MCF 10A (cell line): ENCODE measurements at regions of chr3 and their contacts with region 1.

Region 1: DNA sequence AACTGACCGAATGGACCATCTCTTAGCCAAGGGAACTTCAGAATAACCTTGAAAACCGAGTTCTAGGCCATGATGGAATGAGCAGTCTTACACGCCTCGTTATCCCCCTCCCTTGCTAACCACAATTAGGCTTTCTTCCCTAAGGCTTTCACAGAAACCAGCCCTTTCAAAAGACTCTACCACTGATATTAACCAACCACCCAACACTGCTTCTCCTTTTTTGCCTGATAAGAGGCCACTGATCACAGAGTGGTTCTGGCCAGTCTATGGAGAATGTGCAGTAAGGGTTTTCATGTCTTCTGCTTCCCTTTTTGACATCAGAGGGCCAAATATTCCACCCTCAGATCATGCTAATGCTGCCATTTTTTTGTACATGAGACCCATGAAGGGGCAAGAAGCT is 59.3 kb downstream of the MCF2L2 start:
- DNase-seq: no peak
- H3K4me3 Mint-ChIP-seq: peak overlapping the region; percentile 20
- H3K27ac Mint-ChIP-seq: peak overlapping the region; percentile 96
- H3K4me1 Mint-ChIP-seq: peaks cover 26% of the 10 kb centered on the region
- H3K27me3 Mint-ChIP-seq: no peaks in the 10 kb centered on the region
- CTCF ChIP-seq: no peak

Region 2: GRCh38 chr3:183275418-183275817 is 93.7 kb before region 1 on chr3:
- CTCF ChIA-PET with region 1: no interaction called
- POLR2A ChIA-PET with region 1: interaction called, 12 read pairs
- intact Hi-C with region 1: no loop called
- DNase-seq: peak; percentile 77
- H3K4me3 Mint-ChIP-seq: peak overlapping the region; percentile 19
- H3K27ac Mint-ChIP-seq: peak overlapping the region; percentile 17
- H3K4me1 Mint-ChIP-seq: peaks cover 41% of the 10 kb centered on the region
- H3K27me3 Mint-ChIP-seq: no peaks in the 10 kb centered on the region
- CTCF ChIP-seq: no peak

Region 3: DNA sequence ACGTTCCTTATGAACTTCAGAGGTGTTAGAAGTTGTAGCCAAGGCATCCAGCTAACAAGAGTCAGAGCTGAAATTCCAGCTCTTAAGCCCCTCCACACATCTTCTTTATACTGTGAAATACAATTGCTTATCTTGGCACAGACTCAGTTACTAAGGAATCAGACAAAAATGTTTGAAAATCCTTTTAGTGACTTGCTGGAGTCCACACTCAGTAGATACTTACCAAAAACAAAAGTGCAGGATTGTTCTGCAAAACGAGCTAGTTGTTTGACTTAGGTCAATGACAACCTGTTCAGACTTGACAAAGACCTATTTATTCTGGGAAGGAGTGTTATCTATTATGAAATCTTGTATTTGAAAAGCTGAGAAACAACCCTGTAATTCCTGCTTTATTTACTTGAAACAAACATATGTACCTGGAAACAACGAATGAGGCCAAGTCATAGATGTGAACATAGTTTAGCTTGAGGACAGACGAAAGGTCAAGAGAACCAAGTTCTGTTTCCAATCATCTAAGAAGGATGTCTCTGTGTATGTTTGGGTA is 77.5 kb before region 1 on chr3:
- CTCF ChIA-PET with region 1: interaction called, 6 read pairs
- POLR2A ChIA-PET with region 1: interaction called, 95 read pairs
- intact Hi-C with region 1: loop called (anchors 2 kb)
- DNase-seq: peak; percentile 66
- H3K4me3 Mint-ChIP-seq: peak overlapping the region; percentile 0
- H3K27ac Mint-ChIP-seq: peak overlapping the region; percentile 86
- H3K4me1 Mint-ChIP-seq: peaks cover 45% of the 10 kb centered on the region
- H3K27me3 Mint-ChIP-seq: no peaks in the 10 kb centered on the region
- CTCF ChIP-seq: no peak

Region 4: DNA sequence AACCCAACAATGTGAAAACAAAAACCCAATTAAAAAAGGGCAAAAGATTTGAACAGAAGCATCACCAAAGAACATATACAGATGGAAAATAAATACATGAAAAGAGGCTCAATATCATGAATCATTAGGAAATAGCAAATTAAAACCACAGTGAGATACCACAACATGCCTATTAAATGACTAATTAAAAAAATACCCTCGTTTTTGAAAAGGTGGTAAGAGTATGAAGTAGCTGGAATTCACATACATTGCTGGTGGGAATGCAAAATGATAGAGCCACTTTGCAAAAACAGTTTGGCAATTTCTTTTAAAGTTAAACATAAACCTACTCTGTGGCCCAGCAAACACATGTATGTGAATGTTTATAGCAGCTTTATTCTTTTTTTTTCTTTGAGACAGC is 40.3 kb before region 1 on chr3:
- CTCF ChIA-PET with region 1: interaction called, 4 read pairs
- POLR2A ChIA-PET with region 1: interaction called, 26 read pairs
- intact Hi-C with region 1: loop called (anchors 1 kb)
- DNase-seq: peak; percentile 46
- H3K4me3 Mint-ChIP-seq: no peak overlapping the region
- H3K27ac Mint-ChIP-seq: peak overlapping the region; percentile 50
- H3K4me1 Mint-ChIP-seq: peaks cover 32% of the 10 kb centered on the region
- H3K27me3 Mint-ChIP-seq: no peaks in the 10 kb centered on the region
- CTCF ChIP-seq: no peak

Region 5: DNA sequence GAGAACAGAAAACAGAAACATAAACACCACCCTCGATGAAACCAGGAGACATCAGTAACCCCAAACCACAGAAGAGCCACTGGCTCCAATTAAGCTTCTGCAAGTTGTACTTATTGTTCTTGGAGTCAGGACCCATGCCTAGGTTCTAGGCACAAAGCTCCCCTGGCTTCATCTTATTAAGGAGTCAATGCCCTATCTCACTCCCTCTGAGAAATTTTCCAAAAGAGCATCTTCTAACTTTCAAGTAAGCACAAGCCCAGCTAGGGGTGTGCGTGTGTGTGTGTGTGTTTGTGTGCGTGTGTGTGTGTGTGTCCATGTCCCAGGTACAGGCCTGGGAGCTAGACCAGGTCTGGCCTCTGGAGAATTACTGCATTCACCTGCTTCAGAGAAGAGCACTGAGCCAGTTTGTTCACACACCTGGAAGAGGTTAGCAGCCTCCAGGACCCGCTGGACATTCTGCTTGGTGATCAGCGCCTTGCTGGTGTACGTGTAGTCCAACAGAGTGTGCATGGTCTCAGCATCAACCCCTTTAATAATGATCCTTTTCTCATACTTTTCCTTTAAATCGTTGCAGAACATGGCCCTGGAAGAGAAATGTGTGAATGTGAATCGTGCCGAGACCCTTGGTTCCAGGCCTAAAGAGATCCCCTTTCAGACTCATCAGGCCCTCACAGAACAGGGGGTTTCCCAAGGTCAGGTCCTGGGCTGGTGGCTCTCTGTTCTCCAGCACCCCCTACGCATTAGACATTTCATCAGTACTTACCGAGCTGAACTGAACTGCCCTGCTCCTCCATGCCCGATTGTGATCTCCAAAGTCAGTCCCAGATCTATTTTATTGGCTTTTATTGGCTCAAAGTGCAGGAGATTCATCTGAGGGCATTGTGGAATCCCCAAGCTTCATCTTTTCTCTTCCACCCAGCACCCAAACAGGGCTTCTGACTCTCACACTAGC is 158.6 kb after region 1 on chr3:
- CTCF ChIA-PET with region 1: no interaction called
- POLR2A ChIA-PET with region 1: no interaction called
- intact Hi-C with region 1: no loop called
- DNase-seq: no peak
- H3K4me3 Mint-ChIP-seq: no peak overlapping the region
- H3K27ac Mint-ChIP-seq: no peak overlapping the region
- H3K4me1 Mint-ChIP-seq: no peaks in the 10 kb centered on the region
- H3K27me3 Mint-ChIP-seq: peaks cover 31% of the 10 kb centered on the region
- CTCF ChIP-seq: no peak